ENCODE measurements at regions of chr1 and their contacts with region 1.

Region 1: DNA sequence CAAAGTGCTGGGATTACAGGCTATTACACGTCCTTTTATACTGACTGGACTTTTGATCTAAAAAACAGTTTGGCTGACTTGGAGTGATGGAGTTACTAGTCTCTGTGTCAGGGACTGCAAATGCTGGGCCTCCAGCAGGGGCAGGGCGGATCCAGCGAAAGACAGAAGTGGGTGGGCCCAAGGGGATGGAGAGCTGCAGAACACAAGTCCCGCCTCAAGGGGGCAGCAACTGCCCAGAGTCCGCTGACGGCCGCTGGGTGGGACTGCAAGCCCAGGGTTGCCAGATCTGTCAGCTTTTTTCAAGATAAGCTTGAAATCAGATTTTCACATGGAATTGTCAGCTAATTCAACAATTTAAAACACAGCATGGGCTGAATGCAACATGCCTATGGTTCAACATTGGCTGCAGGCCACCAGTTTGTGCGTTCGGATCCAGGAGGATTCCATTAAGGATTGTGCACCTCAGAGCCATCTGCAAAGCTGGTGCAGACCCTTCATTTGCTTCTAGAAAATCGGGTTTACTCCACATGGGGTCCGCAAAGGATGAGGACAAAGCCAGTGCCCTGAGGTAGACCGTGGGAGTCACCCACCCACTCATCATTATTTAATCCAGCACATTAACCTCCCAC is 10.7 kb downstream of the STMN1 start:
- DNase-seq: peak; percentile 88
- H3K4me3 ChIP-seq: no peak overlapping the region
- H3K27ac ChIP-seq: no peak overlapping the region
- H3K4me1 ChIP-seq: peaks cover 10% of the 10 kb centered on the region
- H3K27me3 ChIP-seq: no peaks in the 10 kb centered on the region
- CTCF ChIP-seq: peak; percentile 100

Region 2: GRCh38 chr1:25997828-25998761 is 102.6 kb after region 1 on chr1 and contains the start of gene PAFAH2:
- intact Hi-C with region 1: loop called (anchors 1 kb)
- DNase-seq: peak; percentile 97
- H3K4me3 ChIP-seq: peak within 1 kb of the TSS; percentile 84
- H3K27ac ChIP-seq: peak within 1 kb of the TSS; percentile 92
- H3K4me1 ChIP-seq: peaks cover 22% of the 10 kb centered on the region
- H3K27me3 ChIP-seq: no peaks in the 10 kb centered on the region
- CTCF ChIP-seq: peak; percentile 98
- total RNA-seq, gene PAFAH2: 10.6 TPM

Region 3: GRCh38 chr1:26097696-26098095 is 202.2 kb after region 1 on chr1:
- intact Hi-C with region 1: no loop called
- DNase-seq: no peak
- H3K4me3 ChIP-seq: no peak overlapping the region
- H3K27ac ChIP-seq: no peak overlapping the region
- H3K4me1 ChIP-seq: peaks cover 20% of the 10 kb centered on the region
- H3K27me3 ChIP-seq: no peaks in the 10 kb centered on the region
- CTCF ChIP-seq: no peak

Measured in left ventricle myocardium inferior (tissue), 1 donor.